RWPE1 (cell line): ENCODE measurements at regions of chr2 and their contacts with region 1.

Region 1: GRCh38 chr2:16756831-16757644 is 91.4 kb upstream of the CYRIA start:
- DNase-seq: peak; percentile 70
- H3K27ac ChIP-seq: no peak overlapping the region
- CTCF ChIP-seq: peak; percentile 81

Region 2: DNA sequence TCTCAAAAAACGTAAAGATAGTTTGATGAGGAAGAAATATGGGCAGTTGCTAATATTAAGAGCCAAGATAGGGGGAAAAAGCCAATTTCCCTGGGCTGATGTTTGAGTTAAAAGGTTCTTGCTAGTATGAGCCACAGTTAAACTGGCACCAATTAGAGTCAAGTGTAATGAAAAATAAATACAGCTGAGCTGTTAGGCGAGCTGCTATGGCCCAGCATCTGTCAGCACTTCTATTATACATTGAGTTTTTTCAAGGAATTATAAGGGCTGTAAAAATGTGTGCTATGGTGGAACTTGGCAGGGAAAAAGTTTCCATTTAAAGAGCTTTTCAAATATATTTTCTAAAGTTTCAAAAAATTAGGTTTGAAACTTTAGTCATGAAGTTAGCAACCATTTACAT is 371.0 kb before region 1 on chr2:
- CTCF ChIA-PET with region 1: no interaction called
- POLR2A ChIA-PET with region 1: no interaction called
- DNase-seq: no peak
- H3K27ac ChIP-seq: no peak overlapping the region
- CTCF ChIP-seq: no peak

Region 3: DNA sequence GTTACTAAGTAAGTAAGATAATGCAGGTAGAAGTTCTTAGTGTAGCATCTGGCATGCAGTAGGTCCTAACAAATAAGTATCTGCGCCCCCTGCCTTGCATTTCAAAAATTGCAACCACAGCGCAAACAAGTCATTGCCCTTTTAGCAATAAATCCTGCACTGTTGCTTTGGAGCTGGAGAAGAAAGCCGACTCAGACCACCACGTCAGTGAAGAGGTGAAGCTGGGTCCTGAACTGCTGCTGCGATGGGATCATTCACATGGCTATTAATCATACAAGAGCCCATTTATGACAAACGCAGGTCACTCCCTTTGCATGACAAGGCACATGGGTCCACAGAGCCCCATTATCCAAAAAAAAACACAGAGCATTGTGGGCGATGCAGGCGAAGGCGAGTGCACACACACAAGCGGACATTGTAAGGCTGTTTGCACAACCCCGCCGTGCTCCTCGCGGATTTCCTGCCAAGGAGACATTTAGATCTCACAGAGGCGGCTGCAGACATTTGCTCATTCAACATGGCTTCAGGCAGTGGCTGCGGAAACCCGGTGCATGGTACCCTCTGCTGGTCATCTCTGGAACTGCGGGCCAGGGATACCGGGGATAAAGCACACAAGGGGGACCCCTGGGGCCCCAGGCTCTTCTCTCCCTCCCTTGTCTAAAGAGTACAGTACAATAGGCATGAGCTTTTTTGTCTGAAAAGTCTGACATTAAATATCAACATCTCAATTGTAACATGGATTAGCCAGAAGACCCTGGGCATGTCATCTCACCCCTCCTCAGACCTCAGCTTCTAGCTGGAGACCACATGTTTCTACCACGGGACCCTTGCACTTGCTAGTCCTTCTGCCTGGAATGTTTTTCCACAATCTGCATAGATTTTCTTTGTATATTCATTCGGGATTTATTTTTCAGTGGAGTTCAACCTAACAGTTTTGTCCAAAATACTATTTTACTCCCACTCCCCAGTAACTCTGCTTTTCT is 148.1 kb before region 1 on chr2:
- CTCF ChIA-PET with region 1: interaction called, 36 read pairs
- POLR2A ChIA-PET with region 1: no interaction called
- DNase-seq: peak; percentile 71
- H3K27ac ChIP-seq: no peak overlapping the region
- CTCF ChIP-seq: peak; percentile 88

Region 4: GRCh38 chr2:16745466-16745865 is 11.6 kb before region 1 on chr2:
- CTCF ChIA-PET with region 1: interaction called, 11 read pairs
- POLR2A ChIA-PET with region 1: no interaction called
- DNase-seq: no peak
- H3K27ac ChIP-seq: no peak overlapping the region
- CTCF ChIP-seq: no peak